PC-9 (cell line): ENCODE measurements at regions of chr14 and their contacts with region 1.

Region 1: DNA sequence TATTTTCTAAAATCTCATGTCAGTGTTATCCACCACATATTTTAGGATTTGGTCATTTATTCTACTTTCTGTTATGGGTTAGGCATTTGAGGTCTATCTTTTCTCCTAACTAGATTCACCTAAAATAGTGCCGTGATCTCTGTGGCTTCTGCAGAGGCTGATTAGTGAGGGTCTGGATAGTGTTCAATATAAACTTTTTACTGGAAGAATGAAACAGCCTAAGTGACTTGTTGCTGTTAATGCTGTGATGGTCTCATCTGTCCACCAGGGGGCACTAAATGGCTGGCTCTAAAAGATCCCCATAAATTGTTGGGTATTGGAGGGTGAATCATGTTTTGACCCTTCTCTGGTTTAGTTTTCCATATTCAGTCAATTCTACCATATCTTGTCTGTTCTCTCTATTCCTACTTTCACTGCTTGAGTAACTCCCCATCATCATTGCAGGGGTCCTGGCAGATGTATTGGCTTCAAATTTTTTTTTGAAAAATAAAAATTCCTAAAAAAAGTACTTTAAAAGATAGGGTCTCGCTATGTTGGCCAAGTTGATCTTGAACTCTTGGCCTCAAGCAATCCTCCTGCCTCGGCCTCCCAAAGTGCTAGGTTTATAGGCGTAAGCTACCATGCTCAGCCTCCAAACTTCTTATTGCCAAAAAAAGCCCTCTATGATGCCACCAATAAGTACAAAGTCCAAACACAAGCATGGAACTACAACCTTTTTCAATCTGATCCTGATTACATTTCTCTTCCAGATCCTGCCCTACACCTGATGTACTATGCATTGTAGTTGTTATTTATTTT is 6.9 kb downstream of the PABPN1 start:
- DNase-seq: peak; percentile 35 to 36
- H3K4me3 ChIP-seq: no peak overlapping the region
- H3K27ac ChIP-seq: no peak overlapping the region
- H3K4me1 ChIP-seq: peaks cover 3% of the 10 kb centered on the region; the same call in 1 of the 2 replicates
- H3K27me3 ChIP-seq: 0 out of 2 replicates have a peak, but pooled peaks cover 8% of the 10 kb centered on the region
- CTCF ChIP-seq: peak; percentile 77

Region 2: DNA sequence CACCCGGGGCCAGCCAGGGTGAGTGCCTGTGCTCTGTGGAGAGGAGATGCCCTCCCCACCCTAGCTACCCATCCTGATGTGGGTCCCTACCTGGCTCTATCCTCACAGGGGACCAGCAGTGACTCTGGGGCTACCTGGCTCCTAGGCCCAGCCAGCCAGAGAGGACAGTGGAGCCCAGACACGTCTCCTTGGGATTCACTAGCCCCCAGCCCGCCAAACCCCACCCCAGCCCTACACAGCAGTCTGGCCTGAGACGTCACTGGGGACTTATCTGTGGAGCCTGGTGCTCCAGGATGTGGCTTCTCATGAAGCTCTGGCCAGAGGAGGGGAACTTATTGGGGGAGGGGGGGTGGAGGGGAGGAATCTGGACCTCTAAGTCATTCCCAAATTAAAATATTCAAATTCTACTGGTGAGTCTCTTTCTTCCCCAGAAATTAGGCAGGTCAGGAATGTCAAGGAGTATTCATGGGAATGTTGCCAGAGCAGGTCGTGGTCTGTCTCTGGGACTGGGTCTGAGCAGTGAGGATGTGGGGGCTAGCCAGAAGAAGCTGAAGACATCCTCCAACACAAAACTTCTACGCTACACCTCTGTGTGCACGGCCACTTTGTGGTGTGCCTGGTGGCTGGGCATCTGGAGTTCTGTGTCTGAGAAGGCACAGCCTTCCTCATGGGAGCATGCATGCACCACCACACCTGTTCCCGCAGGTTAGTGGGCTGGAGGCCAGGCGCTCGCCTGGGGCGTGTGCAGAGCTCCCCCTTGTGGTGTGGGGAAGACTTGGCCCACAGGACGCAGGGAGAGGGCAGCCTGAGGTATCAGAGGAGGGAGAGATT is 51.4 kb after region 1 on chr14:
- CTCF ChIA-PET with region 1: interaction called, 3 read pairs
- POLR2A ChIA-PET with region 1: no interaction called
- intact Hi-C with region 1: loop called (anchors 1 kb)
- DNase-seq: peak in 1 of 2 experiments; percentile 65
- H3K4me3 ChIP-seq: no peak overlapping the region
- H3K27ac ChIP-seq: no peak overlapping the region
- H3K4me1 ChIP-seq: no peaks in the 10 kb centered on the region
- H3K27me3 ChIP-seq: peaks cover 78% of the 10 kb centered on the region
- CTCF ChIP-seq: peak; percentile 82

Region 3: DNA sequence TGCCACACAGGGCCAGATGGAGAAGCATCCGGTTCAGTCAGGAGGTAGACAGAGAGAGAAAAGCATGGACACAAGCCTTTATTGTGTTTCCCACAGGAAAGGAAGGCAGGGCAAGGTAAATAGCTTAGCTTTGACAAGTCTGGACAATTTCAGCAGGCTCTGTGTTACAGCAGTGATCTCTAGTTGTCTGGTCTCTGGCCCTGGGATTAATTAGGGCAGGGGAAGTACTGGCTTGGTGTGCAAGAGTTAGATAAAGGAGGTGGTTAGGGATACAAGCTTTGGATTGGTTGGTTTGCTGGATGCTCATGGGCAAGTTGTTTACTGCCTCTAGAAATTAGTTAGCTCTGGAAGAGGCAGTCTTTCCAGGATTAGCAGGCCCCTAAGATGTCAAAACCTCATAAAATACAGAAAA is 126.3 kb after region 1 on chr14:
- CTCF ChIA-PET with region 1: no interaction called
- POLR2A ChIA-PET with region 1: no interaction called
- intact Hi-C with region 1: loop called (anchors 5 kb)
- DNase-seq: no peak
- H3K4me3 ChIP-seq: no peak overlapping the region
- H3K27ac ChIP-seq: no peak overlapping the region
- H3K4me1 ChIP-seq: no peaks in the 10 kb centered on the region
- H3K27me3 ChIP-seq: peaks cover 23% of the 10 kb centered on the region
- CTCF ChIP-seq: no peak

Region 4: GRCh38 chr14:23602181-23603095 is 274.3 kb after region 1 on chr14:
- CTCF ChIA-PET with region 1: no interaction called
- POLR2A ChIA-PET with region 1: no interaction called
- intact Hi-C with region 1: no loop called
- DNase-seq: peak in 1 of 2 experiments; percentile 41
- H3K4me3 ChIP-seq: no peak overlapping the region
- H3K27ac ChIP-seq: no peak overlapping the region
- H3K4me1 ChIP-seq: peaks cover 8% of the 10 kb centered on the region; the same call in 1 of the 2 replicates
- H3K27me3 ChIP-seq: no peaks in the 10 kb centered on the region
- CTCF ChIP-seq: no peak